Thyroid gland (tissue), 4 donors: ENCODE measurements at regions of chr17 and their contacts with region 1.

Region 1: GRCh38 chr17:68771867-68772515 is 170.8 kb upstream of the FAM20A start:
- DNase-seq: no peak
- H3K4me3 ChIP-seq: no peak overlapping the region
- H3K27ac ChIP-seq: no peak overlapping the region
- H3K4me1 ChIP-seq: peaks cover 0 to 6% of the 10 kb centered on the region in 2 donors
- H3K27me3 ChIP-seq: no peaks in the 10 kb centered on the region
- CTCF ChIP-seq: peak in 4 of 6 experiments; percentile 52 to 71 (median 66)
- POLR2A ChIP-seq: no peak

Region 2: GRCh38 chr17:69250641-69251040 is 478.6 kb after region 1 on chr17:
- intact Hi-C with region 1: loop called (anchors 5 kb)
- DNase-seq: no peak
- H3K4me3 ChIP-seq: no peak overlapping the region
- H3K27ac ChIP-seq: no peak overlapping the region
- H3K4me1 ChIP-seq: no peaks in the 10 kb centered on the region
- H3K27me3 ChIP-seq: no peaks in the 10 kb centered on the region
- CTCF ChIP-seq: no peak
- POLR2A ChIP-seq: no peak